HepG2 (cell line): ENCODE measurements at regions of chr2 and their contacts with region 1.

Region 1: DNA sequence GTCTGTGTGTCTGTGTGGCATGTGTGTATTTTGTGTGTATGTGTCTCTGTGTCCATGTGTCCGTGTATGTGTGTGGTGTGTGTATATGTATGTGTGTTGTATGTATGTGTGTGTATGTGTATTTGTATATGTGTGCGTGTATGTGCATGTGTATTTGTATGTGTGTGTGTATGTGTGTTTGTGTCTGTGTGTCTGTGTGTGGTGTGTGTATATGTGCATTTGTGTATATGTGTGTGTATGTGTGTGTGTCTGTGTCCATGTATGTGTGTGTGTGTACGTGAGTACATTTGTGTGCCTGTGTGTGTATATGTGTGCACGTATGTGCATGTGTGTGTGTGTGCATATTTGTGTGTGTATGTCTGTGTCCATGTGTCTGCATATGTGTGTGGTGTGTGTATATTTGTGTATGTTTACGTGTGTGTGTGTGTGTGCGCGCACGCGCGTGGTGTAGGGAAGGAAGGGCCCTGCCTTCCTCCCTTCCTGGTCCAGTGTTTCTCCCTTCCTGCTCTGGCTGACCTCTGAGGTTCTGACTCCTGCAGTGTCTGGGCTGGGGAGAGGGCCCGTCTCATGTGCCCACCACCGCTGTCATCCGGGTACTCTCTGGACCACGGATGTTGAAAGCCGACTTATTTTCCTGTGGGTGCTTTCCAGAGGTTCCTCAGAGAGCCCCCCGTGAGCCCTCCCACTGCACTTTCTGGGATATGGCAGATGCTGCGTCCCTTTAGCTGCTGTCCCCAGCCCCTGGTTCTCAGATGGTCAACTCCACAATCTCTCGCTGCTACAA is 209.4 kb downstream of the DYSF start:
- DNase-seq: no peak
- ATAC-seq: no peak
- H3K4me3 ChIP-seq: no peak overlapping the region
- H3K27ac ChIP-seq: no peak overlapping the region
- H3K4me1 ChIP-seq: no peaks in the 10 kb centered on the region
- H3K27me3 ChIP-seq: no peaks in the 10 kb centered on the region
- CTCF ChIP-seq: no peak
- EP300 ChIP-seq: no peak
- POLR2A ChIP-seq: no peak
- RAD21 ChIP-seq: no peak

Region 2: DNA sequence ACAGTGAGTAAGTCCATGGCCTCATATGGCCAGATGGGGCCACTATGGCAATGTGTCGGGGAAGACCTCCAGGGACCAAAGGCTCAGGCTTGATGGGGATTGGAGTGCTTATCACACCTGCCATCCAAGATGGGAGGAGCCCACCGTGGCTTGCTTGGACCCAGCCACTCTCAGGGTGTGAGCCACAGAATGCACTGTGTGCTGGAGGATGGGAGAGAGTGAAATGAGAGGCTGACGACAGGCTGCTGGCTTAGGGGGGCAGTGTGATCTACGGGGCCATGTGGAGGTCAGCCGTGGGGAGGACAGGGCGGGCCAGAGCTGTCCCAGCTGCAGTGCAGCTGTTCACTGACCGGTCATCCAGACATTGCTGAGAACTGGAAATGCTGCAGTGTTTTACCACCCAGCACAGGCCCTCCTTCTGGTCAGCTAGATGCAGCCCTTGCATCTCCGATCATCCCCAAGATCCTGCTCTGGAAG is 145.2 kb after region 1 on chr2:
- CTCF ChIA-PET with region 1: no interaction called
- POLR2A ChIA-PET with region 1: no interaction called
- in situ Hi-C with region 1: no loop called
- intact Hi-C with region 1: no loop called
- DNase-seq: no peak
- ATAC-seq: no peak
- H3K4me3 ChIP-seq: no peak overlapping the region
- H3K27ac ChIP-seq: no peak overlapping the region
- H3K4me1 ChIP-seq: no peaks in the 10 kb centered on the region
- H3K27me3 ChIP-seq: no peaks in the 10 kb centered on the region
- CTCF ChIP-seq: no peak
- EP300 ChIP-seq: no peak
- POLR2A ChIP-seq: no peak
- RAD21 ChIP-seq: no peak

Region 3: DNA sequence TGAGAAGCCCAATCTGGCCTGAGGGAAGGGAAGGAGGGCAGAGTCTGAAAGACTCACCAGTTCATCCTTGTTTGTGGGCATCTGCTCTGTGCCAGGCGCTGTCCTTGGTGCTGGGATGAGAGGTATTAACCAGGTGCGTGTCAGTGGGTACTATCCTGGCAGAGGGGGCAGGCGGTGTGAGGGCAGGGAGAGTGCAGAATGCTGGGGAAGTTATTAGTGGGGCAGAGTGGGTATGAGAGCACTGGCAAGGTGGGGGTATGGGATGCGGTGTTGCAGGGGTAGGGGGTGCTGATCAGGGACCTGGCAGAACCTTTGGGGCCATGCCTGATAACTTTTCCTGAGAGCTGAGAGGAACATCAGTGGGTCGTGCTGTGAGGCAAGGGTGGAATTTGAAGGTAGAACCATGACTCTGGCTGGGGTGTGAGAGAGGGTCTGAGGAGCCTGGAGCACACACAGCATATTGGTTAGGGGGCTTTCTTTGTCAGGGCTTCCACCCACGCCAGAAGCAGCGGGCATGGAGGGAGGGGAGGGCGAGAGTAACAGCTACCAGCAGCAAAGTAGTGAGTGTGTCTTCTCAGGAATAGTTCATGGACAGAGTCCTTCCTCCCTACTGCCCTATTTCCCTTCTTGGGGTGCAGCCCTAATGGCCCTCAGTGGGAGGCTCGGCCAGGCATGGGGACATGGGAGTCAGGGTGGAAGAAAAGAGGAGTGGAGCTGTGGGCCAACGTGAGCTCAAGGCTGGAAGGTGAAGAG is 194.1 kb after region 1 on chr2:
- CTCF ChIA-PET with region 1: no interaction called
- POLR2A ChIA-PET with region 1: no interaction called
- in situ Hi-C with region 1: no loop called
- intact Hi-C with region 1: no loop called
- DNase-seq: no peak
- ATAC-seq: no peak
- H3K4me3 ChIP-seq: no peak overlapping the region
- H3K27ac ChIP-seq: no peak overlapping the region
- H3K4me1 ChIP-seq: no peaks in the 10 kb centered on the region
- H3K27me3 ChIP-seq: peaks cover 6 to 41% of the 10 kb centered on the region in 2 experiments; a peak in 4 of 5 replicates
- CTCF ChIP-seq: no peak
- EP300 ChIP-seq: no peak
- POLR2A ChIP-seq: no peak
- RAD21 ChIP-seq: no peak

Region 4: GRCh38 chr2:71897137-71897480 is 234.3 kb after region 1 on chr2:
- CTCF ChIA-PET with region 1: no interaction called
- POLR2A ChIA-PET with region 1: no interaction called
- in situ Hi-C with region 1: no loop called
- intact Hi-C with region 1: loop called (anchors 5 kb)
- DNase-seq: no peak
- ATAC-seq: no peak; the same call in 2 of the 3 replicates
- H3K4me3 ChIP-seq: no peak overlapping the region
- H3K27ac ChIP-seq: no peak overlapping the region
- H3K4me1 ChIP-seq: no peaks in the 10 kb centered on the region
- H3K27me3 ChIP-seq: peaks cover 15 to 73% of the 10 kb centered on the region in 2 experiments
- CTCF ChIP-seq: no peak
- EP300 ChIP-seq: no peak
- POLR2A ChIP-seq: no peak
- RAD21 ChIP-seq: no peak

Region 5: GRCh38 chr2:71907503-71907902 is 244.7 kb after region 1 on chr2:
- CTCF ChIA-PET with region 1: no interaction called
- POLR2A ChIA-PET with region 1: no interaction called
- in situ Hi-C with region 1: no loop called
- intact Hi-C with region 1: no loop called
- DNase-seq: no peak
- ATAC-seq: no peak
- H3K4me3 ChIP-seq: no peak overlapping the region
- H3K27ac ChIP-seq: no peak overlapping the region
- H3K4me1 ChIP-seq: no peaks in the 10 kb centered on the region
- H3K27me3 ChIP-seq: 0 out of 5 replicates have a peak, but pooled peaks cover 0 to 3% of the 10 kb centered on the region in 2 experiments
- CTCF ChIP-seq: no peak
- EP300 ChIP-seq: no peak
- POLR2A ChIP-seq: no peak
- RAD21 ChIP-seq: no peak